PC-9 (cell line): ENCODE measurements at regions of chr15 and their contacts with region 1.

Region 1: DNA sequence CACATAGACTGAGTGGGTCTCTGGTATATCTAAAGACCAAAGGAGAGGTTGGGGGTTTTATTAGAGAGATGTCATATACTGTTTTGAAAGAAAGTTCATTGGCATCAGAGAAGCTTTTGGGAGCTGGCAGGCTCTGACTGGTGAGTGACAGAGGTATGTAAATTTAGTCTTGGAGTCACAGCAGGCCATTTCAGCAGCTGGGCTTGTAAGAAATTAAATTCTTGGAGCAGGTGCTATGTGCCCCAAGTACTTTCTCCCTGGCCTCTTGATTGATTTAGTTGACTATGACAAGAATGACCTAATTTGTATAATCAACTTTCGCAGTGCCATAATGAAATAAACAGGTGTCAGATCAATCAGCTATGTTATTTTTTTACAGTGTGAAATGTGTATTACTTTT is 47.8 kb upstream of the CDAN1 start:
- DNase-seq: no peak
- H3K4me3 ChIP-seq: no peak overlapping the region
- H3K27ac ChIP-seq: no peak overlapping the region
- H3K4me1 ChIP-seq: no peaks in the 10 kb centered on the region
- H3K27me3 ChIP-seq: no peaks in the 10 kb centered on the region
- CTCF ChIP-seq: no peak

Region 2: DNA sequence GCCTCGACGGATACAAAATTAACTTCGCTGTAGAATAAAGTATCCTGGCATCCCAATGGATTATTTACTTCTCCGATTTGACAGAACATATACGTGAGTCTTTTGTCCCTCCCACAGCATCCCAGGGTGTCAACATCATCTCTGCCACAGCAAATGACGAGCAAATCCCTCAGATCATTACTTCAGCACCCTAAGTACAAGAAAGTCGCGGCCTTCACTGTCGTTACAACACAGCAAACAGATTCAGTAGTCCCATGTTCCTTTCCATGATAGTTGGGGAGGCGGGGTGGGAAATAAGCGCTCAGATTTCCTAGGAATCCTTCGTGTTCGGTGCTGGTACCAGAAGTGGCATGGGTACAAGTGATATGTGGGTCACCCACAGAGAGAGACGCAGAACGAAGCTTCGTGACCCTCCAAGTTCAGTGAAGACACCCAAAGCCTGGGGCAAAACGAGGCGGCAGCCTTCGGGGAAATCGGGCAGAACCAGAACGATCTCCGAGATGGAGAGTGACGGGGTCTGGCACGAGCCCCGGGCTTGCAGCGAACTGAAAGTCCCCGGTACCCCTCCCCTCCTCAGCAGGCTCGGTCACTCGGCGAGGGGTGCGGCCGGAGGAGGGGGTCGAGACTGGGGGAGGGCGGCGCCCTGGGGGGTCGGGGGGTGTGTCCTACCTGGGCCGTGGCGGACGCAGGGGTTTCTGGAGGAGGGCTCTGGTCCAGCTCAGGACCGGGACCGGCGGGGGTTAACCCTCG is 135.2 kb after region 1 on chr15:
- CTCF ChIA-PET with region 1: interaction called, 12 read pairs
- POLR2A ChIA-PET with region 1: no interaction called
- intact Hi-C with region 1: no loop called
- DNase-seq: peak in 1 of 2 experiments; percentile 21
- H3K4me3 ChIP-seq: peak overlapping the region; percentile 69
- H3K27ac ChIP-seq: no peak overlapping the region
- H3K4me1 ChIP-seq: peaks cover 15% of the 10 kb centered on the region; the same call in 1 of the 2 replicates
- H3K27me3 ChIP-seq: no peaks in the 10 kb centered on the region
- CTCF ChIP-seq: no peak

Region 3: GRCh38 chr15:43449981-43450380 is 665.3 kb after region 1 on chr15:
- CTCF ChIA-PET with region 1: interaction called, 18 read pairs
- POLR2A ChIA-PET with region 1: no interaction called
- intact Hi-C with region 1: no loop called
- DNase-seq: no peak
- H3K4me3 ChIP-seq: no peak overlapping the region
- H3K27ac ChIP-seq: no peak overlapping the region
- H3K4me1 ChIP-seq: no peaks in the 10 kb centered on the region
- H3K27me3 ChIP-seq: no peaks in the 10 kb centered on the region
- CTCF ChIP-seq: no peak